GM12878 (cell line): ENCODE measurements at regions of chr17 and their contacts with region 1.

Region 1: GRCh38 chr17:1186923-1187771 is 7.4 kb upstream of the ABR start:
- DNase-seq: no peak
- ATAC-seq: peak; percentile 78
- H3K4me3 ChIP-seq: no peak overlapping the region
- H3K27ac ChIP-seq: no peak overlapping the region
- H3K4me1 ChIP-seq: peaks cover 56% of the 10 kb centered on the region
- H3K27me3 ChIP-seq: no peaks in the 10 kb centered on the region
- CTCF ChIP-seq: peak; percentile 92 to 99 (median 92)
- EP300 ChIP-seq: no peak
- POLR2A ChIP-seq: no peak
- RAD21 ChIP-seq: peak; percentile 84

Region 2: DNA sequence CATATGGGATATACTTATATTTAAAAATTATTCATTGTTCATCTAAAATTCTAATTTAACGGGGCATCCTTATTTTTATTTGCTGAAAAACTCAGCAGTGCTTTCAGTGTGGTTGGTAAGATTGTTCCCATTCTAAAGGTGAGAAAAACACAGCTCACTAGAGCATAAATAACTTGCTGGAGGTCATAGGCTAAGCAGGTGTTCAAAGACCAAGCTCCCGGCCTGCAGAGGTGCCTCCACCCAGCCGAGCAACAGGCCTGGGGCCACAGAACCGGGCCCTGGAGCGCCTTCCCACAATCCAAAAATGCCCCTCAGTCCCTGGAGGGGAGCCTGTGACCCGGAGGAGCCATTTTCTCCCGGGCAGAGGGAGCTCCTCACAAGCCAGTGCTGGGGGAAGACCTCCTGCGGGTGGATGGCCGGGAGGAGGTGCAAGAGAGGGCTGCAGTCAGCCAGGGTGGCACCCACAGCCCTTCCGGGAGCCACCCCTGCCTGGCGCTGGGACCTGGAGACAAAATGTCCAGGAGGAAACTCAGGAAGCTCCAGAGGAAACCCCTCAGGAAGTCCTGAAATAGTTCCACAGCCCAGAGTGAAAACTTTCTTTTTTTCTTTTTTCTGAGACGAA is 22.1 kb before region 1 on chr17:
- CTCF ChIA-PET with region 1: interaction called, 25 read pairs
- POLR2A ChIA-PET with region 1: no interaction called
- RAD21 ChIA-PET with region 1: interaction called, 14 read pairs
- SMC1A ChIA-PET with region 1: interaction called, 8 read pairs
- in situ Hi-C with region 1: no loop called
- intact Hi-C with region 1: no loop called
- DNase-seq: no peak
- ATAC-seq: peak; percentile 82
- H3K4me3 ChIP-seq: no peak overlapping the region; the same call in 1 of the 2 replicates
- H3K27ac ChIP-seq: peak overlapping the region; percentile 31; the same call in 1 of the 2 replicates
- H3K4me1 ChIP-seq: peaks cover 8% of the 10 kb centered on the region
- H3K27me3 ChIP-seq: no peaks in the 10 kb centered on the region
- CTCF ChIP-seq: peak; percentile 16 to 21 (median 20); a peak in 2 of 6 replicates
- EP300 ChIP-seq: no peak
- POLR2A ChIP-seq: no peak
- RAD21 ChIP-seq: no peak

Region 3: DNA sequence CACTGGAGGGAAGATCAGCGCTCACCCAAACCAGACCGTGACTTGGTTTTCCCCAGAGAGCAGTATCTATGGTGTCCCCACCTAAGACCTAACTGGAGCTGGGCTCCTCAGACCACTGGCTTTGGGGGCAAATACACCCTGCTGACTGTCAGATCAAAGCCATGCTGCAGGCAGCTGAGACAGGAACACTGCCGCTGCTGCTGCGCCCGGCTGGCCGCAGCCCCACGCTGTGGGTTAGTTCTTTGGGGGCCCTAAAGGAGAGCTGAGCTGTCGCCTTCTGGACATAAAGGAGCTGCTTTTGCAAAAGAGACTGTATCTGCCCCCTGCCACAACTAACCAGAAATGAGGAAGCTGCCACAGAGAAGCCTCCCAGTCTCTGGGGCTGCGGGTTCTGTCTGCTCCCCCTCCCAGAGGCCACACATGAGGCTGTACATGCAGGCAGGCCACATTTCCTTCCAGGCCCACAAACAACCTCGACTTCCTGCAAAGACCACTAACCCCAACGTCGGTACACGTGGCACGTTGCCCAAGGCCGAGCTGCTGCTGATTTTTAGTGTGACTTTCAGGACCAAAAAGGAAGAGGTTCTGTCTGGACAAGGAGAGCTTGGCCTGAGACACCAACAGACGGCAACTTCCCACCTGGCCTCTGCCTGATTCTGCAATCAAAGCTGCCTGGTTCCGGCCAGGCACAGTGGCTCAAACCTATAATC is 10.8 kb after region 1 on chr17:
- CTCF ChIA-PET with region 1: interaction called, 138 read pairs
- POLR2A ChIA-PET with region 1: interaction called, 21 read pairs
- RAD21 ChIA-PET with region 1: interaction called, 44 read pairs
- SMC1A ChIA-PET with region 1: interaction called, 40 read pairs
- in situ Hi-C with region 1: no loop called
- intact Hi-C with region 1: no loop called
- DNase-seq: peak; percentile 97
- ATAC-seq: peak; percentile 88
- H3K4me3 ChIP-seq: peak overlapping the region; percentile 29; the same call in 1 of the 2 replicates
- H3K27ac ChIP-seq: peak overlapping the region; percentile 89
- H3K4me1 ChIP-seq: peaks cover 56% of the 10 kb centered on the region
- H3K27me3 ChIP-seq: no peaks in the 10 kb centered on the region
- CTCF ChIP-seq: no peak
- EP300 ChIP-seq: peak; percentile 64 to 81; a peak in 3 of 4 replicates
- POLR2A ChIP-seq: peak; percentile 57; the same call in 1 of the 2 replicates
- RAD21 ChIP-seq: 0 out of 2 replicates have a peak, but pooled peaks have one; percentile 11

Region 4: GRCh38 chr17:1203111-1203966 is 16.2 kb after region 1 on chr17:
- CTCF ChIA-PET with region 1: interaction called, 138 read pairs
- POLR2A ChIA-PET with region 1: interaction called, 21 read pairs
- RAD21 ChIA-PET with region 1: interaction called, 44 read pairs
- SMC1A ChIA-PET with region 1: interaction called, 40 read pairs
- in situ Hi-C with region 1: no loop called
- intact Hi-C with region 1: no loop called
- DNase-seq: no peak
- ATAC-seq: 0 out of 3 replicates have a peak, but pooled peaks have one; percentile 6
- H3K4me3 ChIP-seq: no peak overlapping the region
- H3K27ac ChIP-seq: no peak overlapping the region
- H3K4me1 ChIP-seq: peaks cover 61% of the 10 kb centered on the region
- H3K27me3 ChIP-seq: no peaks in the 10 kb centered on the region
- CTCF ChIP-seq: no peak
- EP300 ChIP-seq: no peak
- POLR2A ChIP-seq: no peak
- RAD21 ChIP-seq: no peak

Region 5: DNA sequence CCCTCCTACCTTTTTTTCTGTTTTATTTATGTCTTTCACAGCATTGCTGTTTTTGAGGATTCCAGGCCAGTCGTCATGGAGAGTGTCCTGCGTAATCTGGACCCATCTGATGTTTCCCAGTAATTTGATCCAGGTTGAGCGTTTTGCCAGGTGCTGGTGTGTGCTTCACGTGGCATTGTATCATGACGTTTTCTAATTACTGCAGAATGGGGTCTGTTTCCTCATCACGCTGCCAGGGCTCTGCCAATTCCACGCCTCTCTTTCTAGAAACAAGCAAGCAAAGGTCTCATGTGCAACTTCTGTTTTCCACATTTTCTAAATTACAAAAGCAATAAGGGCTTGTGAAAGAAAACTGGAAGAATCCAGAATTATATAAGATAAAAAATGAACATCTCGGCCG is 54.8 kb after region 1 on chr17:
- CTCF ChIA-PET with region 1: no interaction called
- POLR2A ChIA-PET with region 1: no interaction called
- RAD21 ChIA-PET with region 1: no interaction called
- SMC1A ChIA-PET with region 1: no interaction called
- in situ Hi-C with region 1: no loop called
- intact Hi-C with region 1: no loop called
- DNase-seq: no peak
- ATAC-seq: no peak
- H3K4me3 ChIP-seq: no peak overlapping the region
- H3K27ac ChIP-seq: no peak overlapping the region
- H3K4me1 ChIP-seq: no peaks in the 10 kb centered on the region
- H3K27me3 ChIP-seq: no peaks in the 10 kb centered on the region
- CTCF ChIP-seq: no peak
- EP300 ChIP-seq: no peak
- POLR2A ChIP-seq: no peak
- RAD21 ChIP-seq: no peak

Region 6: DNA sequence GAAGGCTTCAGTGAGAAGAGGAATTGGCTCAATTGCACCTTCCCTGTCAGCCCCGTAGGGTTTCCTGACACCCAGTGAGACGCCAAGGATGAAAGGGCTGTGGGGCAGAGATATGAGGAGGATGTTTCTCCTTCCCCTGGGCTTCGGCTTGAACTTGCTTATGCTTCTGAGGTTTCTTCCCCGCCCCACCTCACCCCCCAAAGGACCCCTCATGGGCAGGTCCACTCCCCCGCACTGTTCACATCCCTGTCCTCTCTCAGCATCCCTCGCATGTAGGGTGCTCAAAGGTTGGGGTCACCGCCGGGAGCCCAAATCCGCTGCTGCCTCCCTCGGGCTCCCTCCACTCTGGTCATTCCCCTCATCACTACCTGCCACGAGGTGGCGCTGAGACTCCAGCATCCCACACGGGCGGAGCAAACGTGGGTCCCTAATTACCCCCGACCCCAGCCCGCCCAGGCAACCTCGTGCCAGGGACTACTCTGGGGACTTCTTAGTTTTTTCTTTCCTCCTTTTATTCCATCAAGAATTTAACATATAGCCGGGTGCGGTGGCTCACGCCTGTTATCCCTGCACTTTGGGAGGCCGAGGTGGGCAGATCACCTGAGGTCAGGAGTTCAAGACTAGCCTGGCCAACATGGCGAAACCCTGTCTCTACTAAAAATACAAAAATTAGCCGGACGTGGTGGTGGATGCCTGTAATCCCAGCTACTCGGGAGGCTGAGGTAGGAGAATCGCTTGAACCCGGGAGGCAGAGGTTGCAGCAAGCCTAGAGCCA is 89.0 kb after region 1 on chr17:
- CTCF ChIA-PET with region 1: no interaction called
- POLR2A ChIA-PET with region 1: no interaction called
- RAD21 ChIA-PET with region 1: no interaction called
- SMC1A ChIA-PET with region 1: no interaction called
- in situ Hi-C with region 1: no loop called
- intact Hi-C with region 1: no loop called
- DNase-seq: no peak
- ATAC-seq: peak; percentile 95
- H3K4me3 ChIP-seq: no peak overlapping the region
- H3K27ac ChIP-seq: no peak overlapping the region
- H3K4me1 ChIP-seq: no peaks in the 10 kb centered on the region
- H3K27me3 ChIP-seq: no peaks in the 10 kb centered on the region; a peak in 1 of 4 replicates
- CTCF ChIP-seq: peak; percentile 68 to 92 (median 86)
- EP300 ChIP-seq: no peak
- POLR2A ChIP-seq: no peak
- RAD21 ChIP-seq: peak; percentile 88

Region 7: DNA sequence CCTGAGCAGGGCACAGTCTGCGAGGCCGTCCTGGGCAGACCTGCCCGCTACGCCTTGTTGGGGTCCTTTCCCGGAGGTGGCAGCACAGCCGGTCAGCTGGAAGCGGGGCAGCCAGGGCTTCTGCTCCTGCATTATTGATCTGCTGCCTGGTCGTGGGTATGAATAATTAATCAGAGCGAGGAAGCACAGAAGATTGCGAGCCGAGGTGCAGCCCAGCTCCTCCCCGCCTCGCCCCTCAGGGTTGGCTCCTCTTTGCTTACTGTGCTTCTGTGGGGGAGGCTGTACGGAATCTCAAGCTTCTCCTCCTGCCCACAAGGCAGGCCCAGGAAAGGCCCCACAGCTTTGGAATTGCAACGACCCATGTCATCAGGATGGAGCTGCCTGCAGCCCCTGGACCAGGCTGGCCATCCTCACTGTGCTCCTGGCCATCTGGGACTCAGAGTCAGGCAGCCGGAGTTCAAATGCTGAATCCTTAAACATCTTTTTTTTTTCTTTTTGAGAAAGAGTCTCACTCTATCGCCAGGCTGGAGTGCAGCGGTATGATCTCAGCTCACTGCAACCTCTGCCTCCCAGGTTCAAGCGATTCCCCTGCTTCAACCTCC is 117.9 kb after region 1 on chr17:
- CTCF ChIA-PET with region 1: no interaction called
- POLR2A ChIA-PET with region 1: no interaction called
- RAD21 ChIA-PET with region 1: no interaction called
- SMC1A ChIA-PET with region 1: no interaction called
- in situ Hi-C with region 1: no loop called
- intact Hi-C with region 1: no loop called
- DNase-seq: no peak
- ATAC-seq: no peak
- H3K4me3 ChIP-seq: no peak overlapping the region
- H3K27ac ChIP-seq: no peak overlapping the region
- H3K4me1 ChIP-seq: no peaks in the 10 kb centered on the region
- H3K27me3 ChIP-seq: no peaks in the 10 kb centered on the region
- CTCF ChIP-seq: no peak
- EP300 ChIP-seq: no peak
- POLR2A ChIP-seq: no peak
- RAD21 ChIP-seq: no peak